ENCODE measurements at regions of chr16 and their contacts with region 1.

Region 1: DNA sequence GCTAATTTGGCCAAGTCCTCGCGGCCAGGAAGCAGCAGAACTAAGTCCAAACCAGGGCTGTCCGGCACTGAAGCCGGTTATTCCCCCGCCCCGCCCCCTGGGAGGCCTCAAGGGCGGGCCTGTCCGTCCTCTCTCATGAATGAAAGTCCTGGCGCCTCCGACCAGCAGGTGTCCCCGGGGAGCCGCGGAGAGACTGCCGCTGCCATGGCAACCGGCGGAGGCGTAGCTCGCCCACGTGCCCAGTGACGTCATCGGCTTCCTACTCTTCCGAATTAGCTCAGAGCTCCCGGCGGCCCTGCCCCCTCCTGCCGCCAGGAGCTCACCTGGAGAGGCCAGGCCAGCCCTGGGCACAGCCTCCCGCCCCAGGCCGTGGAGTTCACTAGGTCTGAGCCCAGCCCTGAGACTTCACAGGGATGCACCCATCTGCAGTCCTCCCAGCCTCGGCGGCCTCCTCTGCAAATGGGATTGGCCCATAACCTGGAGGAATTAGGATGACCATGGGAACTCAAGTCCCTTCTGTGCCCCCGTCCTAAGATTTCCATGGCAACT is 1.3 kb downstream of the SPATA2L start:
- DNase-seq: peak; percentile 95 to 97
- ATAC-seq: peak; percentile 77 to 83
- H3K4me3 ChIP-seq: peak overlapping the region; percentile 62 to 84 (median 67)
- H3K27ac ChIP-seq: peak overlapping the region; percentile 62 to 67 (median 66)
- H3K4me1 ChIP-seq: peaks cover 15 to 17% of the 10 kb centered on the region in 2 donors
- H3K27me3 ChIP-seq: peaks cover 0 to 19% (median 5%) of the 10 kb centered on the region in 3 donors
- CTCF ChIP-seq: peak; percentile 70 to 85 (median 77)
- POLR2A ChIP-seq: peak in 1 of 2 donors; percentile 23

Region 2: DNA sequence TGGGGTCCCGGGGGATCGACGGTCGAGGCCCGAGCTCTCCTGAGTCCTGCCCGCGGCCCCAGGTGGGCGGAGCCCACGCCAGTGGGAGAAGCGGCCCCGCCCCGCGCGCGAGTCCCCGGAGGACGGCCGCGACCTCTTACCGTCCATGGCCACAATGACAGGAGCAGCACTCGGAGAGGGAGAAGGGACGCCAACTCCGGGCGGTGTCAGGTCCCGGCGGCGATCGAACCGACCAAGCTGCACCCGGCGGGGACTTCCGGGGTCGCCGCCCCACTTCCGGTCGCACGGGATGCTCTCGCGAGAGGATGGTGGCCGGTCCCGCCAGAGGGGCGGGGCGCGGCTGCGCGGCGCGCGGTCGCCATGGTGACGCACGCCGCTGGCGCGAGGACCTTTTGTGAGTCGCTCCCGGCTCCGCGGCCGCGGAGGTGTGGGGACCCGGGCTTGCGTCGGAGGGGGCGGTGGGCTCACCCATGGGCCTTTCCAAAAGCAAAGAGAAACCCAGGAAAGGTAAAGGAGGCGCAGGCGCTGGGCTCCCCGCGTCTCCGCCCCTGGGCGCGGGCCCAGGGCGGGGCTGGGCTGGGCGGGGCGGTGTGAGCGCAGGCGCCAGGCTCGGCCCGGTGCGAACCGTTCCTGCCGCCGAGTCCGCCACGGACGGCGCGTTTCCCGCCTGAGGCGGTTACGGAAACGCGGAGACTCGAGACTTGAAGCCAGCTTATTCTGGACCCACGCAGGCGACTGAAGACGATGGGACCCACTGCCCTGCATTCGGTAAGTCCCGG is 42.5 kb before region 1 on chr16 and contains the starts of genes CHMP1A and SPATA33:
- in situ Hi-C with region 1: no loop called
- intact Hi-C with region 1: loop called (anchors 1 kb)
- DNase-seq: peak; percentile 70 to 84
- ATAC-seq: peak; percentile 98
- H3K4me3 ChIP-seq: peak within 1 kb of the TSS; percentile 96 to 100 (median 99)
- H3K27ac ChIP-seq: peak within 1 kb of the TSS; percentile 86 to 91 (median 89)
- H3K4me1 ChIP-seq: peaks cover 18 to 19% of the 10 kb centered on the region in 2 donors
- H3K27me3 ChIP-seq: no peaks in the 10 kb centered on the region
- CTCF ChIP-seq: no peak
- POLR2A ChIP-seq: peak; percentile 54 to 78
- total RNA-seq, gene CHMP1A: 53.4 to 105 (median 78.8) TPM
- total RNA-seq, gene SPATA33: 1.2 to 2.7 (median 2.1) TPM

Region 3: GRCh38 chr16:89686520-89687091 is 13.6 kb before region 1 on chr16 and contains the start of gene CDK10:
- in situ Hi-C with region 1: no loop called
- intact Hi-C with region 1: loop called (anchors 1 kb)
- DNase-seq: peak; percentile 60 to 85
- ATAC-seq: peak; percentile 97
- H3K4me3 ChIP-seq: peak within 1 kb of the TSS; percentile 86 to 90 (median 88)
- H3K27ac ChIP-seq: peak within 1 kb of the TSS; percentile 73 to 92 (median 90)
- H3K4me1 ChIP-seq: peaks cover 11 to 19% of the 10 kb centered on the region in 2 donors
- H3K27me3 ChIP-seq: no peaks in the 10 kb centered on the region
- CTCF ChIP-seq: peak in 1 of 5 experiments; percentile 12
- POLR2A ChIP-seq: peak; percentile 50 to 69
- total RNA-seq, gene CDK10: 16.9 to 26.1 (median 19.7) TPM

Region 4: GRCh38 chr16:89720813-89721545 is 20.8 kb after region 1 on chr16 and contains the starts of genes VPS9D1 and ZNF276:
- in situ Hi-C with region 1: no loop called
- intact Hi-C with region 1: loop called (anchors 1 kb)
- DNase-seq: peak; percentile 54 to 58
- ATAC-seq: peak; percentile 81
- H3K4me3 ChIP-seq: peak within 1 kb of the TSS; percentile 67 to 92 (median 81)
- H3K27ac ChIP-seq: peak within 1 kb of the TSS; percentile 85 to 99 (median 95)
- H3K4me1 ChIP-seq: peaks cover 27 to 33% of the 10 kb centered on the region in 2 donors
- H3K27me3 ChIP-seq: no peaks in the 10 kb centered on the region
- CTCF ChIP-seq: peak in 1 of 5 experiments; percentile 17
- POLR2A ChIP-seq: peak; percentile 69 to 72
- total RNA-seq, gene VPS9D1: 2.3 to 9.4 (median 3.4) TPM
- total RNA-seq, gene ZNF276: 11.1 to 13.6 (median 11.5) TPM

Region 5: GRCh38 chr16:89798832-89799370 is 98.7 kb after region 1 on chr16:
- in situ Hi-C with region 1: loop called in 2 of 4 experiments (anchors 10 kb)
- intact Hi-C with region 1: no loop called
- DNase-seq: no peak
- ATAC-seq: no peak
- H3K4me3 ChIP-seq: no peak overlapping the region
- H3K27ac ChIP-seq: no peak overlapping the region
- H3K4me1 ChIP-seq: no peaks in the 10 kb centered on the region
- H3K27me3 ChIP-seq: no peaks in the 10 kb centered on the region
- CTCF ChIP-seq: no peak
- POLR2A ChIP-seq: no peak

Region 6: GRCh38 chr16:89860747-89861304 is 160.7 kb after region 1 on chr16:
- in situ Hi-C with region 1: no loop called
- intact Hi-C with region 1: loop called (anchors 1 kb)
- DNase-seq: peak; percentile 16 to 31
- ATAC-seq: peak in 1 of 2 donors; percentile 62
- H3K4me3 ChIP-seq: no peak overlapping the region
- H3K27ac ChIP-seq: no peak overlapping the region
- H3K4me1 ChIP-seq: peaks cover 0 to 5% of the 10 kb centered on the region in 2 donors
- H3K27me3 ChIP-seq: no peaks in the 10 kb centered on the region
- CTCF ChIP-seq: peak; percentile 79 to 95 (median 90)
- POLR2A ChIP-seq: no peak

Region 7: DNA sequence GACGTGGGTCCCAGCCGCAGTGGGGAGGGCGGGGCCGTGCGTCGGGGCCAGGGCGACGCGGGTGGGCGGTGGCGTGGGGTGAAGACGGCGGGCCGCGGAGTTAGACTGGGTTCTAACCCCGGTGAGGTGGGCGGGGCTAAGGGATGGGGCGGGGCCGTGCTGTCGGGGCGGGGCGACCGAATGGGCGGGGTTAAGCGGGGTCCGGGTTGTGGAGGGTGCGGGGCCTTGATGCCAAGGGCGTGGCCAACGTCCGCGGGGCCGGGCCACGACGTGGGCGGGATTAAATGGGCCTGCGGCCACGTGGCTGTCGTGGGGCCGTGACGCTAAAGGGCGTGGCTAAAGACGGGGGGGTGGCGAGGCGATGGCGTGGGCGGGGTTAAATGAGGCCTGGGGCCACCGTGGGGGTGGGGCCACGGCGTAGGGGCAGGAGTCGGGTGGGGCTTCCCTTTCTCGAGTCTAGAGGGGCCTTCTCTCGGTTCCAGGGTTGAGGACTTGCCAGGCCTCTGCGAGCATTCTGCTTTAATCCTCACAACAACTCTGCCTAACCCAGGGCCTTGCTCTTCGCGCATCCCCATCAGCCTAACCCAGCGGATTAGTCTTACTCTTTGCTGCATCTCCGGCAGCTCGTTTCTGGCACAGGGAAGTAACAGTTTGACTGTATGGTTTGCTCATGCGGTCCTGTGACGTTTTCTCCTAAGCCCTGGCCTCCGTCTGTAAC is 174.0 kb after region 1 on chr16:
- in situ Hi-C with region 1: loop called in 1 of 4 experiments (anchors 10 kb)
- intact Hi-C with region 1: loop called (anchors 1 kb)
- DNase-seq: peak; percentile 92 to 94
- ATAC-seq: peak; percentile 74 to 79
- H3K4me3 ChIP-seq: peak overlapping the region; percentile 94 to 99 (median 96)
- H3K27ac ChIP-seq: peak overlapping the region; percentile 99 to 100 (median 100)
- H3K4me1 ChIP-seq: peaks cover 10 to 14% of the 10 kb centered on the region in 2 donors
- H3K27me3 ChIP-seq: no peaks in the 10 kb centered on the region
- CTCF ChIP-seq: no peak
- POLR2A ChIP-seq: no peak